ENCODE measurements at regions of chr15 and their contacts with region 1.

Region 1: DNA sequence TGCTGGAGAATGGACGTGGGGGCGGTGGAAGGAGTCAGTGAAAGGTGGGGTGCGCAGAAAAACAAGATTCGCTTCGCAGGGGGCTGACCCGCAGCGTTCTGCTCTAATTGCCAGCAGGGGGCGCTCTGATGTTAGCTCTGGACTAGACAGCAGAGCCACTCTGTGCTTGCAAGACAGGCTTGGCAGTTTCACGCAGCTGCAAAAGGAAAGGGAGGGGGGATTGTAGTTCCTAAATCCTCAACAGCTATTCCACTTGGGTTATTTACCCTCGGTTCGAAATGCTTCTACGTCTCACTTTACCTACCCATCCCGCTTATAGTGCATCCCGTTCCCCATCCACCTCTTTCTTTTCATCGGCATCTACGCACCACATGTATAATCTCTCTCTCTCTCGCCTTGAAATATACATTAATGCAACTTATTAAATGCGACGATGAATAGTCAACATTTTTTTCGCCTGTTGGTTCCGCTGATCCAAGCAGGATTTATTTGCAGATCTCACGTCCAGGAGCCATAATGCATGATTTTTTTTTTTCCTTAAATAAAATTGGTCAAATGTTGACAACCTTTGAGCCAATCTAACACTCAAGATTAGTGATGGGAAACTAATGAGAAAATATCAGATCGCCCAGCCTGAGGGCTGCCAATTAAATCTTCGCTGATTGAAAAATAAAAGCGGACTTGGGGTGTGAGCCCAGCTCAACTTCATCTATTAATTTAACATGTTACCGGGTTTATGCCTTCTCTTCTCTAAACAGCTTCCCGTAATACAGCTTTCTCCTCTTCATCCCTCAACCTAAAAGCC is 216.4 kb downstream of the MEIS2 start:
- DNase-seq: peak; percentile 94

Region 2: GRCh38 chr15:37109872-37110572 is 226.1 kb after region 1 on chr15:
- intact Hi-C with region 1: loop called (anchors 1 to 10 kb)
- DNase-seq: no peak